ENCODE measurements at regions of chr3 and their contacts with region 1.

Region 1: DNA sequence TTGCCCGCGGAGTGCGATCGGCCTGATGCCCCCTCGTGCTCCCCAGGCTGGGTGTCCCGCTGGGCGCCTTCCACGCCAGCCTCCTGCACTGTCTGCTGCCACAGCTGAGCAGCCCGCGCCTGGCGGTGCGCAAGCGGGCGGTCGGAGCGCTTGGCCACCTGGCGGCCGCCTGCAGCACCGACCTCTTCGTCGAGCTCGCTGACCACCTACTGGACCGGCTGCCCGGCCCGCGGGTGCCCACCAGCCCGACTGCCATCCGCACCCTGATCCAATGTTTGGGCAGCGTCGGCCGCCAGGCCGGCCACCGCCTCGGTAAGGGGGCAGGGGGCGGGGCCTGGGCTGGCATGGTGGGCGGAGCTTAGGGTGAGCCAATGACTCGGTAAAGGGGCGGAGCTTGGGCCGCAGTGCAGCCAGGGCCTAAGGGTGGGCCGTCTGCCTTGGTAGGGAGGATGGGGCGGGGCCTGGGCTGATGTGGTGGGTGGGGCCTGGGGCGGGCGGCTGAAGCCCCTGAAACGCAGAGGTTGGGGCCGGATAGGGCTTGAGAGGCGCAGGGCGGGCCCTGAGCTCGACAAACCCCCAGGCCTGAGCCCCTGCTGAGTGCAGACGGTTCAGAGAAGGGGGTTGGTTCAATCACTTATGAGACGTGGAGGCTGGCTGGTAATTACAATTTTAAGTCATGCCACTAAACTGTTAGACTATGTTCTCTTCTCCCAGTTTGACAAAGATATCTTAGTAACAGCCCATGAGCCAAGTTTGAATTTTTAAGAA is 13.7 kb downstream of the CAND2 start:
- DNase-seq: peak; percentile 94 to 95
- H3K4me3 ChIP-seq: peak overlapping the region; percentile 53
- H3K4me3 Mint-ChIP-seq: peak overlapping the region; percentile 66
- H3K27ac Mint-ChIP-seq: no peak overlapping the region
- H3K4me1 ChIP-seq: 0 out of 2 replicates have a peak, but pooled peaks cover 4% of the 10 kb centered on the region
- H3K4me1 Mint-ChIP-seq: no peaks in the 10 kb centered on the region
- H3K27me3 ChIP-seq: no peaks in the 10 kb centered on the region
- H3K27me3 Mint-ChIP-seq: peaks cover 4% of the 10 kb centered on the region
- CTCF ChIP-seq: peak; percentile 48 to 80

Region 2: GRCh38 chr3:12822725-12823373 is 12.7 kb after region 1 on chr3:
- CTCF ChIA-PET with region 1: interaction called, 20 read pairs
- POLR2A ChIA-PET with region 1: interaction called, 3 read pairs
- intact Hi-C with region 1: no loop called
- DNase-seq: no peak
- H3K4me3 ChIP-seq: no peak overlapping the region
- H3K4me3 Mint-ChIP-seq: no peak overlapping the region
- H3K27ac Mint-ChIP-seq: no peak overlapping the region
- H3K4me1 ChIP-seq: peaks cover 5% of the 10 kb centered on the region
- H3K4me1 Mint-ChIP-seq: peaks cover 7% of the 10 kb centered on the region
- H3K27me3 ChIP-seq: no peaks in the 10 kb centered on the region
- H3K27me3 Mint-ChIP-seq: no peaks in the 10 kb centered on the region
- CTCF ChIP-seq: peak; percentile 16 to 50

Measured in Caco-2 (cell line).